Esophagus muscularis mucosa (tissue), 4 donors: ENCODE measurements at regions of chr1 and their contacts with region 1.

Region 1: DNA sequence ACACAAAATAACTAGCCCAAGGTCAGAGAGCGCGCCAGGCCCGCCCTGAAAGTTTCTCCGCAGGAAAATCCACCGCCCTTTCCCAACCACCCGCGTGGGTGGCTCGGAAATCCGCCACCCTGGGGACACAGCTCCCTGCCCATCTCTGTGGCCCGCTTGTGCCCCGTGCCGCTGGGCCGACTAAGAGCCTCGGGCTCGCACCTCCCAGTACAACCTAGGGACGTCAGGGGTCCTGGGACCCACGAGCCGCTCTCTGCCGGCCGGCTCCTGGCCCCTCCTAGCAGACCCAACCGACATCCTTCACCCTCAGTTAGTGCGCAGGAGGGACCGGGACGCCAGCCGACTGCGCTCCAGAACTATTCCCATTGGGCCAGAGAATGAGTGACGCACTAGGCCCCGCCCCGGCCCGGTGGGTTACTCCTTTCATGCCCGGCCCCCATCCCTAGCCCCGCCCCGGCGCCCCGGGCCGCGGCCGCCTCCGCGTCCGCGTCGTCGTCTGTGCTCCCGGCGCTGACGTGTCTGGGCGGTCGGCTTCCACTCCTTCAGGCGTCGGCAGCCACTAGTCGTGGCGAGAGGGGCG is 395 bp upstream of the UAP1 start:
- DNase-seq: peak; percentile 100
- H3K4me3 ChIP-seq: peak overlapping the region; percentile 77 to 94 (median 82)
- H3K27ac ChIP-seq: peak overlapping the region; percentile 86 to 98 (median 98)
- H3K4me1 ChIP-seq: peaks cover 12 to 41% (median 28%) of the 10 kb centered on the region in 4 donors
- H3K27me3 ChIP-seq: no peaks in the 10 kb centered on the region
- CTCF ChIP-seq: no peak
- EP300 ChIP-seq: peak; percentile 56
- POLR2A ChIP-seq: no peak

Region 2: DNA sequence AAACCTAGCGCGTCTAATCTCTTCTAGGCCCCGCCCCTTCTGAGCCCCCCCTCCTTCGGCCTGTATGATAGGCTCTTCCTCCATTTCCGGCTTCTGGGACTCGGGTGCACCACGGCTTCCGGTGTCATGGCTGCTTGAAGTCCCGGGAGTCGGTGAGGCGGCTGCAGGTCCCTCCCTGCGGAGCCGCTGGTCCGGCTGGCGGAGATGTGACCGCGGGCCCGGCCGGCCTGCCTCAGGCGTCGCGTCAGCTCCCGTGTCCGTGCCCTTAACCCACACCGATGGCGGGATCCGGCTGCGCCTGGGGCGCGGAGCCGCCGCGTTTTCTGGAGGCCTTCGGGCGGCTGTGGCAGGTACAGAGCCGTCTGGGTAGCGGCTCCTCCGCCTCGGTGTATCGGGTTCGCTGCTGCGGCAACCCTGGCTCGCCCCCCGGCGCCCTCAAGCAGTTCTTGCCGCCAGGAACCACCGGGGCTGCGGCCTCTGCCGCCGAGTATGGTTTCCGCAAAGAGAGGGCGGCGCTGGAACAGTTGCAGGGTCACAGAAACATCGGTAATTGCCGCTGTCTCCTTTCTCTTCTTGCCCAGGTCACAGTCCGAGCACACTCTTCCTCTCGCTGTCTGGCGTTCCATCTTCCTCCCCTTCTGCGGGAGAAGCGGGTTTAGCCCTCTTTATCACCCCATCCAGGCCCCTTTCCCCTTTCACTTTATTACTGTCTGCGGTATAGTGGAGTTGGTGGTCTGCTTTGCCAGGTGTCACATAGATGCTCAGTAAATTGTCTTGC is 63.2 kb before region 1 on chr1 and contains the start of gene UHMK1:
- intact Hi-C with region 1: loop called (anchors 5 kb)
- DNase-seq: peak; percentile 98
- H3K4me3 ChIP-seq: peak within 1 kb of the TSS; percentile 95 to 100 (median 98)
- H3K27ac ChIP-seq: peak within 1 kb of the TSS; percentile 93 to 96 (median 95)
- H3K4me1 ChIP-seq: peaks cover 16 to 39% (median 38%) of the 10 kb centered on the region in 4 donors
- H3K27me3 ChIP-seq: no peaks in the 10 kb centered on the region
- CTCF ChIP-seq: no peak
- EP300 ChIP-seq: no peak
- POLR2A ChIP-seq: peak; percentile 33
- total RNA-seq, gene UHMK1: 25.3 to 34.4 (median 30.6) TPM